Breast epithelium (tissue), 4 donors: ENCODE measurements at regions of chr17 and their contacts with region 1.

Region 1: DNA sequence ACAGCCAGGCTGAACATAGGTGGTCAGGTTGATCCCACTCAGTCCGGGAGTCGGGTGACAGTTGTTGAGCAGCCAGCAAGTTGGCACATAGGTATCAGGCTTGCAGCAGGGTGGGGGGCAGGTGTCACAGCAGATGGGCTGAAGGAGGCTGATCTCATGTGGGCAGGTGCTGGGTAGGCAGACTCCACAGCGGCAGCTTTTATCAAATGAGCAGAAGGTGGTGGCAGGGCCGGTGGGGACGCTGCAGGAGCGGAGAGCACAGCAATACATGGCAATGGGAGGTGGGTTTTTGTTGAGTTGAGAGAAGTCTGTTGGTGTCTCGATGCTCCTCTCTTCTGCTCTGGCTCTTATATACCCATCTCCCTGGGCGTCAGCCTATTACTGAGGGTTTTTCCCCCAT is at the start of gene KRTAP3-1:
- DNase-seq: no peak
- H3K4me3 ChIP-seq: no peak within 1 kb of the TSS
- H3K27ac ChIP-seq: no peak within 1 kb of the TSS
- H3K4me1 ChIP-seq: no peaks in the 10 kb centered on the region
- H3K27me3 ChIP-seq: no peaks in the 10 kb centered on the region
- CTCF ChIP-seq: no peak
- POLR2A ChIP-seq: no peak
- total RNA-seq, gene KRTAP3-1: not detected

Region 2: DNA sequence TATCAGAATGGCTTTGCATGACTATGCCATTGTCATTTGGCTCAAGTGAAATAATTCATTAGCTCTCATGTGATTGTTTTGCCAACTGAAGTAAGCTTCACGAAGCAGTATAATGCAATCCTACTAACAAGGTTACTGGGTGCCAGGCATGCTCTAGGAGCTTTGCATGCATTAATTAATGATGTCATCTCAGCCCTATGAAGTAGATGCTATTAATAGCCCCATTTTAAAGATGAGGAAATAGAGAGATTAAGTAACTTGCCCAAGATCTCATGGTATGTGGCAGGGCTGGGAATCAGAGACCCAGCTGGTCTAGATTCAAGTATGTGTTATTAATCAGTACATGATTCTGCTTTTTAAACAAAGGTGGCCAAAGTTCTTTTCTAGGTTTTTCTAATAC is 56.1 kb before region 1 on chr17:
- intact Hi-C with region 1: no loop called
- DNase-seq: no peak
- H3K4me3 ChIP-seq: no peak overlapping the region
- H3K27ac ChIP-seq: peak overlapping the region in 1 of 2 donors; percentile 52
- H3K4me1 ChIP-seq: peaks cover 0 to 13% of the 10 kb centered on the region in 2 donors
- H3K27me3 ChIP-seq: no peaks in the 10 kb centered on the region
- CTCF ChIP-seq: no peak
- POLR2A ChIP-seq: no peak

Region 3: GRCh38 chr17:41019415-41019814 is 10.6 kb after region 1 on chr17:
- intact Hi-C with region 1: loop called (anchors 1 kb)
- DNase-seq: no peak
- H3K4me3 ChIP-seq: no peak overlapping the region
- H3K27ac ChIP-seq: no peak overlapping the region
- H3K4me1 ChIP-seq: no peaks in the 10 kb centered on the region
- H3K27me3 ChIP-seq: no peaks in the 10 kb centered on the region
- CTCF ChIP-seq: no peak
- POLR2A ChIP-seq: no peak

Region 4: GRCh38 chr17:41049110-41049509 is 40.3 kb after region 1 on chr17:
- intact Hi-C with region 1: no loop called
- DNase-seq: no peak
- H3K4me3 ChIP-seq: no peak overlapping the region
- H3K27ac ChIP-seq: no peak overlapping the region
- H3K4me1 ChIP-seq: no peaks in the 10 kb centered on the region
- H3K27me3 ChIP-seq: peaks cover 0 to 4% of the 10 kb centered on the region in 2 donors
- CTCF ChIP-seq: no peak
- POLR2A ChIP-seq: no peak